ENCODE measurements at regions of chr10 and their contacts with region 1.

Region 1: GRCh38 chr10:31808258-31809218 is 120.1 kb downstream of the ARHGAP12 start:
- DNase-seq: peak; percentile 6
- ATAC-seq: peak; percentile 49; the same call in 1 of the 2 replicates
- H3K4me3 ChIP-seq: no peak overlapping the region
- H3K27ac ChIP-seq: no peak overlapping the region
- H3K4me1 ChIP-seq: no peaks in the 10 kb centered on the region
- H3K27me3 ChIP-seq: no peaks in the 10 kb centered on the region
- CTCF ChIP-seq: peak; percentile 1 to 64 (median 28); a peak in 4 of 6 replicates
- POLR2A ChIP-seq: no peak
- RAD21 ChIP-seq: peak; percentile 58

Region 2: DNA sequence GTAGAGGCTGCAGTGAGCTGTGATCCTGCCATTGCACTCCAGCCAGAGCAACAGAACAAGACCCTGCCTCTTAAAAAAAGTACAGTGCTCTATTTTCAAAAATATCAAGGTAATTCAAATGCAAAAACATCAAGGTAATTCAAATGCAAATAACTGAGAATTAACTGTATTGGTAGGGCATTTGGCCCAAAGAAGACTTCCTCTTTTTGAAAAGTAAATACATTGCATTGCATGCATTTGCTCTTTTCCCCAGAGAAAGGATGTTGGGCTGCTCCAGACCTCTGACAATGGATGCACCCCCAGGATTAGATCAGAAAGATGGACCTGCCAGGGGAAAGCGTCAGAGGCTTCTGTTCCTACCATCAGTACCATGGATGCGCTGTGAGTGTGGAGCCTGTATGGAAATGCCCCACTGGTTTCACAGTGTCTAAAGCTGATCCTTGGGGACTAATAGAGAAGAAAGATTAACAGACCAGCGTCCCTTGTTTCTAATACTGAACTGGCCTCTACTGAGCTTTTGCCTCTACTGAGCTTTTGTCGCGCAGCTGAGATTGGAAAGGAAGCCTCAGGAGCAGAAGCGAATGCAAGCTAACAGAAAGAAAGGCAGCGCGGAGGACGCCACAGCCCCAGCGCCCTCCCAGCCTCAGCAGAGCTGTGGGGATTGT is 1085.5 kb before region 1 on chr10:
- CTCF ChIA-PET with region 1: no interaction called
- POLR2A ChIA-PET with region 1: no interaction called
- RAD21 ChIA-PET with region 1: no interaction called
- intact Hi-C with region 1: loop called (anchors 10 kb)
- DNase-seq: no peak
- ATAC-seq: no peak
- H3K4me3 ChIP-seq: no peak overlapping the region
- H3K27ac ChIP-seq: no peak overlapping the region
- H3K4me1 ChIP-seq: no peaks in the 10 kb centered on the region
- H3K27me3 ChIP-seq: no peaks in the 10 kb centered on the region
- CTCF ChIP-seq: no peak
- POLR2A ChIP-seq: no peak
- RAD21 ChIP-seq: no peak

Region 3: GRCh38 chr10:30751678-30752331 is 1056.7 kb before region 1 on chr10:
- CTCF ChIA-PET with region 1: interaction called, 4 read pairs
- POLR2A ChIA-PET with region 1: no interaction called
- RAD21 ChIA-PET with region 1: no interaction called
- intact Hi-C with region 1: loop called (anchors 10 kb)
- DNase-seq: peak; percentile 10
- ATAC-seq: peak; percentile 99
- H3K4me3 ChIP-seq: no peak overlapping the region
- H3K27ac ChIP-seq: no peak overlapping the region
- H3K4me1 ChIP-seq: no peaks in the 10 kb centered on the region
- H3K27me3 ChIP-seq: no peaks in the 10 kb centered on the region
- CTCF ChIP-seq: peak; percentile 63 to 87 (median 86); a peak in 5 of 6 replicates
- POLR2A ChIP-seq: no peak
- RAD21 ChIP-seq: peak; percentile 91

Region 4: DNA sequence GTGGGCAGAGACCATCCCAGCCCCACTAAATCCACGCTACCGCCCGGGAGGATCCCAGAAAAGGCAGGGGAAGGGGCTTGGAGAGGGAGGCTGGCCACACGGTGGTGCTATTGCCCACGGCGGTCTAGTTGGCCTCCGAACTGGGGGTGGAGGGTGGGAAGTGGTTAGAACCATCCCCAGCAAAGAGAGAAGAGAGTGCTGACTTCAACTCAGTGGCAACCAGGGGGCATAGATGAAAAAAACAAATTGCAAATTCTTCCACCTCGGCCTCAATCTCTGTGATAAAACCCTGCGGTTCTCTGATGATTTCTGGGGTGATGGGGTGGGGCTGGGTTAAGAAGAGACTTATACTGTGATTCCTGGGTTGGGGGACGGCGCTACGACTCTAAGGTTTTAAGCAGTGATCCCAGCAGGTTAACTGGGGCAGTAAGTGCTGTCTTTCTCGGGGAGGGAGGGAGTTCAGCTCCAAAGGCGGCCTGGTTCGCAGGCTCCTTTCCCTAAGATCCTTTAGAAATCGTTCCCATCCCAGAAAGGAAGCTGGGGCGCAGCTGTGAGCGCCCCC is 1024.5 kb before region 1 on chr10:
- CTCF ChIA-PET with region 1: no interaction called
- POLR2A ChIA-PET with region 1: no interaction called
- RAD21 ChIA-PET with region 1: no interaction called
- intact Hi-C with region 1: loop called (anchors 10 kb)
- DNase-seq: peak; percentile 19
- ATAC-seq: peak; percentile 88
- H3K4me3 ChIP-seq: no peak overlapping the region
- H3K27ac ChIP-seq: no peak overlapping the region
- H3K4me1 ChIP-seq: no peaks in the 10 kb centered on the region; a peak in 1 of 4 replicates
- H3K27me3 ChIP-seq: peaks cover 2% of the 10 kb centered on the region; the same call in 1 of the 2 replicates
- CTCF ChIP-seq: peak; percentile 59 to 89 (median 83); a peak in 5 of 6 replicates
- POLR2A ChIP-seq: no peak
- RAD21 ChIP-seq: peak; percentile 88

Region 5: GRCh38 chr10:31437959-31438358 is 370.6 kb before region 1 on chr10:
- CTCF ChIA-PET with region 1: no interaction called
- POLR2A ChIA-PET with region 1: no interaction called
- RAD21 ChIA-PET with region 1: no interaction called
- intact Hi-C with region 1: no loop called
- DNase-seq: no peak
- ATAC-seq: no peak
- H3K4me3 ChIP-seq: no peak overlapping the region
- H3K27ac ChIP-seq: no peak overlapping the region
- H3K4me1 ChIP-seq: no peaks in the 10 kb centered on the region
- H3K27me3 ChIP-seq: no peaks in the 10 kb centered on the region
- CTCF ChIP-seq: no peak
- POLR2A ChIP-seq: no peak
- RAD21 ChIP-seq: no peak